WTC11 (cell line): ENCODE measurements at regions of chr17 and their contacts with region 1.

Region 1: DNA sequence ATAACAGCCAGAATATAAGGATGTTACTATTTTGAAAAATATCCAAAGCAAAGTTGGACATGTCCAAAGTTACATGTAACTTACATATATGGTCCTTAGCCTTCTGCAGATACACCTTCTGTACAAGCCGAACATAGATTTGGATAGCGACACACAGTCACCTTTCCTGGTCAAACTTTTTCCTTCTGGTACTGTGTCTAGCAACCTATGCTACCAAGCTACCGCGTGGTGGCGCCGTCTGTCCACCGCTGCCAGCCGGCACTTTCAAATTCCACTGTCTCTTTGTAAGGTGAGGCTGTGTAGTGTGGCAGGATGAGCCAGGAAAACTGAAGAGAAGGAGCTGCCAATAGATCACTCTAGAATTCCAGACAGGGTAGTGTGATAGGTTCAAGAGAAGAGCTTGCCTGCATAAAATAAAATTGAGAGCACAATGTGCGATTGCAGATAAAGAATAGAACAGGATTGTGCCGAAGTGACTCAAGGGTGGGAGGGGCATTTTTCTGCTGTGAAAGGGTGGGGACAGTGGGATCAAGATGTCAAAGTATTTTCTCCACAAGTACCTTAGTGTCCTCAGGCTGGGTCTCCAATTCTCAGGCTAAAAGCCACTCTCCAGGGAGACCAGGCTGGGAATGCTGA is 366.9 kb downstream of the SLC39A11 start:
- DNase-seq: peak; percentile 64
- ATAC-seq: peak; percentile 77
- H3K4me3 Mint-ChIP-seq: no peak overlapping the region
- H3K27ac Mint-ChIP-seq: peak overlapping the region; percentile 50; the same call in 1 of the 2 replicates
- H3K4me1 Mint-ChIP-seq: peaks cover 48% of the 10 kb centered on the region
- H3K27me3 Mint-ChIP-seq: no peaks in the 10 kb centered on the region
- CTCF ChIP-seq: peak; percentile 87

Region 2: DNA sequence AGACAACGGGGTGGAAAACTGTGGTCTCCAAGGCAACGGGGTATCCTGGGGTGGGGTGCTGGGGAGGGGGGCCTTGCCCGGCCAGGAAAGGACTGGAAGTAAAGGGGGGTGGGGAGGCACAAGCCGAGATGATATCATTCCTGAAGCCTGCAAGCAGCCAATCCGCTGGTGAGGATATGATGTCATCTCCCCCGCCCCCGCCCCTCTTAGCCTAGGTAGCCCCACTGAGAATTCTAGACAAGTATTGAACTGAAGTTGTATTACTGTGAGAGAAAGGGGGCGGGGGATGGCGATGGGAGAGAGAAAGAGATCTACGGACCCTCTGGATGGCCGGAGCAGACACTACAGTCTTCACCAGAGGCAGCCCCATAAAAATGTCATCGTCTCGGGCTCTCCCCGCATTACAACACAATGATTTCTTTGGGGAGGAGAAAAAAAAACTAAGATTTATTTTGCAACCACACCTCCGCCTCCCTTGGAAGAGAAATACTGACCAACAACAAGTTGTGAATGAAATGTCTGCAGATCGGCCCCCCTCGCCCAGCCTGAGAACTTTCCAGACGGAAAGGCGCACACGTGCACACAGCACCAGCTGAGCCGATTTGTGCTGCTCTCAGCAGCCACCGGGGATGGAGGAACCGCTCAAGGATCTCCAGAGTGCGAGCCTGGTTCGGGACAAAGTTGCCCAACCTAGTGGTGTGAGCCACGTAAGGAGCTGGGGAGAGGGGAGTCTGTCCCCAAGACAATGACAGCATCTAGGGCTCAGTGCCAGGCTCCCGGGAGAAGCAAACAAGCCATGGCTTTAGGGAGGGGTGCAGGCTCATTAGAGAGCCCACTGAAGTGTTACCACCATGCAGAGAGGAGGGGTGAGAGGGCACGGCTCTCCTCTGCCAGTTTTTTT is 382.7 kb before region 1 on chr17:
- CTCF ChIA-PET with region 1: no interaction called
- POLR2A ChIA-PET with region 1: no interaction called
- DNase-seq: no peak
- ATAC-seq: no peak
- H3K4me3 Mint-ChIP-seq: no peak overlapping the region
- H3K27ac Mint-ChIP-seq: no peak overlapping the region
- H3K4me1 Mint-ChIP-seq: peaks cover 7% of the 10 kb centered on the region
- H3K27me3 Mint-ChIP-seq: no peaks in the 10 kb centered on the region
- CTCF ChIP-seq: no peak

Region 3: GRCh38 chr17:72743037-72743467 is 17.5 kb after region 1 on chr17:
- CTCF ChIA-PET with region 1: interaction called, 12 read pairs
- POLR2A ChIA-PET with region 1: no interaction called
- DNase-seq: no peak
- ATAC-seq: peak; percentile 88
- H3K4me3 Mint-ChIP-seq: no peak overlapping the region
- H3K27ac Mint-ChIP-seq: peak overlapping the region; percentile 38; the same call in 1 of the 2 replicates
- H3K4me1 Mint-ChIP-seq: peaks cover 20% of the 10 kb centered on the region
- H3K27me3 Mint-ChIP-seq: no peaks in the 10 kb centered on the region
- CTCF ChIP-seq: no peak

Region 4: GRCh38 chr17:72952220-72952984 is 226.9 kb after region 1 on chr17:
- CTCF ChIA-PET with region 1: interaction called, 15 read pairs
- POLR2A ChIA-PET with region 1: no interaction called
- DNase-seq: peak; percentile 21
- ATAC-seq: peak; percentile 73
- H3K4me3 Mint-ChIP-seq: no peak overlapping the region
- H3K27ac Mint-ChIP-seq: peak overlapping the region; percentile 37
- H3K4me1 Mint-ChIP-seq: peaks cover 31% of the 10 kb centered on the region
- H3K27me3 Mint-ChIP-seq: no peaks in the 10 kb centered on the region
- CTCF ChIP-seq: no peak

Region 5: GRCh38 chr17:73092523-73093135 is 367.1 kb after region 1 on chr17 and contains the start of gene SLC39A11:
- CTCF ChIA-PET with region 1: interaction called, 11 read pairs
- POLR2A ChIA-PET with region 1: no interaction called
- DNase-seq: peak; percentile 93
- ATAC-seq: peak; percentile 93
- H3K4me3 Mint-ChIP-seq: peak within 1 kb of the TSS; percentile 98
- H3K27ac Mint-ChIP-seq: peak within 1 kb of the TSS; percentile 95
- H3K4me1 Mint-ChIP-seq: peaks cover 23% of the 10 kb centered on the region
- H3K27me3 Mint-ChIP-seq: no peaks in the 10 kb centered on the region; the same call in 1 of the 2 replicates
- CTCF ChIP-seq: no peak
- total RNA-seq, gene SLC39A11: 18.9 to 25.5 TPM (median 22.3 TPM) in 3 replicates

Region 6: DNA sequence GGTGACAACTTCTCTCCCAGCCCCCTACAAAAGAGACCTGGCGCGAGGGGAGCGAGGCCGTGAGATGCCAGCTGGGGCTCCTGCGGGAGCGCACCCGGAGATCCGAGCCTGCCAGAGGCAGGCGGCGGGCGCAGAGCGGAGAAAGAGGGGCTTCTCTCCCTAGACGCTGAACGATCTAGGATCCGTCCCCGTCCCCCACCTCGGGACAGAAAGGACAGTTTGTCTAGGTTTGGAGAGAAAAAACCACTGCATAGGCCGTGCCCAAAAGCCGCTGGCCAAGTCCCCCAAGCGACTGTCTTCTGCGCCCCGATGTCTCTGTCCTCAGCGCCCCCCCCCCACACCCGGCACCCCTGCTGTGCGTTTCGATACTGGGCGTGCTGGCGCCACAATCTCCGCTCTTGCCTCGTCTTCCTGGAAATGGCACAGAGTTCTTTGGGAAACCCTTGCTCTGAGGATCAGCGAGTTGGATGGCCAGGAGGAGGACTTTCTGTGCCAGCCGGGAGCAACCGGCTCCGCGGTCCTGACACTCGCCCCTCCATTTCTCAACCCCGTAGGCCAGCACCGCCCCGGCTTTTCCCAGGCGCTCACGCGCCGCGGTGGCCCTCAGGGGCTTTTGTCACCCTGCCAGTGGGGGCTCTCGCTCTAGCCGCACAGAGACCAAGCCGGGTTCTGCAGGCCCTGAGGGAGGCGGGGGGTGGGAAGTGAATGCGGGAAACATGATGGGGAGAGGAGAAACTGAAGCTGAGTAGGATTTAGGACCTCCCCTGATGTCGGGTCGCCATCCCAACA is 440.3 kb after region 1 on chr17:
- CTCF ChIA-PET with region 1: interaction called, 25 read pairs
- POLR2A ChIA-PET with region 1: no interaction called
- DNase-seq: peak; percentile 38
- ATAC-seq: peak; percentile 2; the same call in 1 of the 2 replicates
- H3K4me3 Mint-ChIP-seq: peak overlapping the region; percentile 85
- H3K27ac Mint-ChIP-seq: no peak overlapping the region
- H3K4me1 Mint-ChIP-seq: peaks cover 50% of the 10 kb centered on the region
- H3K27me3 Mint-ChIP-seq: peaks cover 74% of the 10 kb centered on the region
- CTCF ChIP-seq: no peak